Gastrocnemius medialis (tissue), 4 donors: ENCODE measurements at regions of chr1 and their contacts with region 1.

Region 1: GRCh38 chr1:145777357-145778145 is 46.3 kb downstream of the RNF115 start:
- DNase-seq: no peak
- ATAC-seq: peak in 1 of 2 donors; percentile 19
- H3K4me3 ChIP-seq: no peak overlapping the region
- H3K27ac ChIP-seq: peak overlapping the region; percentile 77 to 86 (median 84)
- H3K4me1 ChIP-seq: peaks cover 27 to 45% of the 10 kb centered on the region in 2 donors
- H3K27me3 ChIP-seq: no peaks in the 10 kb centered on the region
- CTCF ChIP-seq: no peak
- POLR2A ChIP-seq: no peak

Region 2: DNA sequence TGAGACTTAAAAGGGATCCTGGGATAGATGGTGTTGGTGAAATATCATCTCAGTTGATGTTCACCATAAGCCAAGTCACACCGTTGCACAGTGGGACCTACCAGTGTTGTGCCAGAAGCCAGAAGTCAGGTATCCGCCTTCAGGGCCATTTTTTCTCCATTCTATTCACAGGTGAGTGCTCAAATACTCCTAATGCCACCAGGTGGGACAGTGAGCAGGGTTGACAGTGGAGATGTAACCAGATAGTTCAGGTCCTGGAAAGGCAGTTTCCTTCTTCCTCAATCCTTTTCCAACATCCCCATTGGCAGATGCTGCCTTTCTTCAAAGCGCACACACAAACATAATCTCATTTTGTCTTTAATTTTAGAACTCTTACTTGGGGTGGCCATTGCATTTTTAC is 46.7 kb before region 1 on chr1:
- in situ Hi-C with region 1: no loop called
- intact Hi-C with region 1: no loop called
- DNase-seq: no peak
- ATAC-seq: no peak
- H3K4me3 ChIP-seq: no peak overlapping the region
- H3K27ac ChIP-seq: no peak overlapping the region
- H3K4me1 ChIP-seq: no peaks in the 10 kb centered on the region
- H3K27me3 ChIP-seq: no peaks in the 10 kb centered on the region
- CTCF ChIP-seq: no peak
- POLR2A ChIP-seq: no peak

Region 3: GRCh38 chr1:145837656-145838055 is 60.1 kb after region 1 on chr1:
- in situ Hi-C with region 1: loop called in 1 of 4 experiments (anchors 10 kb)
- intact Hi-C with region 1: no loop called
- DNase-seq: no peak
- ATAC-seq: no peak
- H3K4me3 ChIP-seq: no peak overlapping the region
- H3K27ac ChIP-seq: no peak overlapping the region
- H3K4me1 ChIP-seq: peaks cover 0 to 4% of the 10 kb centered on the region in 2 donors
- H3K27me3 ChIP-seq: no peaks in the 10 kb centered on the region
- CTCF ChIP-seq: no peak
- POLR2A ChIP-seq: no peak